ENCODE measurements at regions of chr12 and their contacts with region 1.

Region 1: GRCh38 chr12:131607658-131608447 is 103.0 kb upstream of the SFSWAP start:
- DNase-seq: peak; percentile 47
- H3K4me3 Mint-ChIP-seq: peak overlapping the region; percentile 74
- H3K27ac Mint-ChIP-seq: peak overlapping the region; percentile 98
- H3K4me1 Mint-ChIP-seq: peaks cover 69% of the 10 kb centered on the region
- H3K27me3 Mint-ChIP-seq: no peaks in the 10 kb centered on the region

Region 2: GRCh38 chr12:130945786-130946492 is 661.9 kb before region 1 on chr12:
- CTCF ChIA-PET with region 1: no interaction called
- POLR2A ChIA-PET with region 1: no interaction called
- DNase-seq: no peak
- H3K4me3 Mint-ChIP-seq: no peak overlapping the region
- H3K27ac Mint-ChIP-seq: no peak overlapping the region
- H3K4me1 Mint-ChIP-seq: no peaks in the 10 kb centered on the region
- H3K27me3 Mint-ChIP-seq: peaks cover 10% of the 10 kb centered on the region

Region 3: GRCh38 chr12:131222256-131223139 is 385.4 kb before region 1 on chr12:
- CTCF ChIA-PET with region 1: no interaction called
- POLR2A ChIA-PET with region 1: no interaction called
- DNase-seq: no peak
- H3K4me3 Mint-ChIP-seq: no peak overlapping the region
- H3K27ac Mint-ChIP-seq: no peak overlapping the region
- H3K4me1 Mint-ChIP-seq: peaks cover 5% of the 10 kb centered on the region
- H3K27me3 Mint-ChIP-seq: no peaks in the 10 kb centered on the region

Region 4: GRCh38 chr12:131402781-131403396 is 205.0 kb before region 1 on chr12:
- CTCF ChIA-PET with region 1: no interaction called
- POLR2A ChIA-PET with region 1: no interaction called
- DNase-seq: no peak
- H3K4me3 Mint-ChIP-seq: no peak overlapping the region
- H3K27ac Mint-ChIP-seq: no peak overlapping the region
- H3K4me1 Mint-ChIP-seq: no peaks in the 10 kb centered on the region
- H3K27me3 Mint-ChIP-seq: no peaks in the 10 kb centered on the region

Region 5: GRCh38 chr12:131592972-131593371 is 14.9 kb before region 1 on chr12:
- CTCF ChIA-PET with region 1: interaction called, 6 read pairs
- POLR2A ChIA-PET with region 1: interaction called, 15 read pairs
- DNase-seq: peak; percentile 58
- H3K4me3 Mint-ChIP-seq: no peak overlapping the region
- H3K27ac Mint-ChIP-seq: peak overlapping the region; percentile 80
- H3K4me1 Mint-ChIP-seq: peaks cover 27% of the 10 kb centered on the region
- H3K27me3 Mint-ChIP-seq: no peaks in the 10 kb centered on the region

Region 6: DNA sequence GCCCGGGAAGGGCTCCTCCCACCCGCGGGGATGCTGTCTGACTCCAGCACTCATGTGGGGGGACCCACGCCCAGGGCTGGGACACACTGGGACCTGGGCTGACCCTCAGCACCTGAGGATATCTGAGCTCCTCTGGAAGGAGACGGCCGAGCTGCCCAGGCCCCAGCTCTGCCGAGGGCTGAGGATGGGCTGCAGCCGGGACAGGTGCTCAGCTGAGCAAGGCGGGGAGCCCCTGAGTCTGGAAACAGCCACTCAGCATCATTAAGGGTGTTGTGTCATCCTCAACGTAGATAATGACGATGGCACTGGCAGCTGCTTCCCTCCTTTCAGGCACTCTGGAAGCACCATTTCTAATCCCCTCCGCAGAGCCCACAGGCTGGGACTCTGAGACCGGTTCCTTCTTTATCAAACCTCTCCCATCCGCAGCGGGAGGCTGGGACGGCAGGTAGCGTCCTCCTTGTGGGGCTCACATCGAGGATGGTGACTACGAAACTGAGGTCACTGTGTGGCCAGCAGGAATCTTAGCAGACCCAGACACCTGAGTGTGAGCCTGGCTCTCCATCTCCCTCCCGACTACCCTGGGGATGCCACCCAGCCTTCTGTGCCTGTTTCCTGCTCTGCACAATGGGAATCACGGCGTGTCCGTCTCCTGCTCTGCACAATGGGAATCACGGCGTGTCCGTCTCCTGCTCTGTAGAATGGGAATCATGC is 76.3 kb after region 1 on chr12:
- CTCF ChIA-PET with region 1: no interaction called
- POLR2A ChIA-PET with region 1: no interaction called
- DNase-seq: no peak
- H3K4me3 Mint-ChIP-seq: no peak overlapping the region
- H3K27ac Mint-ChIP-seq: no peak overlapping the region
- H3K4me1 Mint-ChIP-seq: no peaks in the 10 kb centered on the region
- H3K27me3 Mint-ChIP-seq: no peaks in the 10 kb centered on the region

Region 7: DNA sequence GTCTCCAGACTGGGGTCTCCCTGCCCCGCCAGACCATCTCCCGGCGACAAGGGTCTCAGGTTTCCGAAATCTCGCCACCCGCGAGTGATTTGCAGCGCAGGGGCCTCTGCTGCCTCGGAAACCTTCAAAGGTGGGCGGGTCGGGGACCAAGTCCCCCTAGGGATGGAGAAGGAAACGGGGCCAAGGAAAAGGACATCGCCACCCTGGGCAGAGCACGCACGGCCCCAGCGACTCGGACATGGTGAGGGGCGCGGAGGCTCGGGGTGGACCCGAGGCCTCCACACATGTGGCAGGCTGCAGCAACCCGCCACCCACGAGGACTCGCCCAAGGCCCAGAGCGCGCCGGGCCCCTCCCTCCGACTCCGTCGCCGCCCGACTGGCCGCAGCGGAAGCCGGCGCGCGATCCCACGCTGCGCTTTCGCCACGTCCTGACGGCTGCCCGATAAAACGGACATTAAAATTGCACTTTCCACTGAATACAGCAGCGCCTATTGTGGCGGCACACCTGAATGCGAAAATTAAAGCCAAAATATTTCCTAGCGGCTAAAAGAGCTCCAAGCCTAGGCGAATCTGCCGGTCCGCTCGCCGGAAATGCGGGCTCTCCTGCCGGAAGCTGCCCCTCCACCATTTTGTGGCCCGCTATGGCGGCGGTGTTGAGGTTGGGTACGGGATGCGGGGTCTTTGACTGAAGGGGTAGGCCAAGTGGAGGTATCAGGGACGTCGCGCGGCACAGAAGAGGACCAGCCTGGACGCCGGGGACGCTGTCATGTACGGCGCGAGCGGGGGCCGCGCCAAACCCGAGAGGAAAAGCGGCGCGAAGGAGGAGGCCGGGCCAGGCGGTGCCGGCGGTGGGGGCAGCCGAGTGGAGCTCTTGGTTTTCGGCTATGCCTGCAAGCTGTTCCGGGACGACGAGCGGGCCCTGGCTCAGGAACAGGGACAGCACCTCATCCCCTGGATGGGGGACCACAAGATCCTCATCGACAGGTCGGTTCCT is 102.9 kb after region 1 on chr12 and contains the start of gene SFSWAP:
- CTCF ChIA-PET with region 1: no interaction called
- POLR2A ChIA-PET with region 1: interaction called, 16 read pairs
- DNase-seq: peak; percentile 75
- H3K4me3 Mint-ChIP-seq: peak within 1 kb of the TSS; percentile 88
- H3K27ac Mint-ChIP-seq: peak within 1 kb of the TSS; percentile 79
- H3K4me1 Mint-ChIP-seq: peaks cover 28% of the 10 kb centered on the region
- H3K27me3 Mint-ChIP-seq: peaks cover 3% of the 10 kb centered on the region
- total RNA-seq, gene SFSWAP: 43.7 to 48.0 TPM

Measured in activated CD4-positive, alpha-beta memory T cell treated with anti-CD3 and anti-CD28 coated beads, Interleukin-2, amount 10 ng/mL, durations not matched to agents 7 days and 5 days (primary cell).